Mucosa of descending colon (tissue), 3 donors: ENCODE measurements at regions of chr11 and their contacts with region 1.

Region 1: DNA sequence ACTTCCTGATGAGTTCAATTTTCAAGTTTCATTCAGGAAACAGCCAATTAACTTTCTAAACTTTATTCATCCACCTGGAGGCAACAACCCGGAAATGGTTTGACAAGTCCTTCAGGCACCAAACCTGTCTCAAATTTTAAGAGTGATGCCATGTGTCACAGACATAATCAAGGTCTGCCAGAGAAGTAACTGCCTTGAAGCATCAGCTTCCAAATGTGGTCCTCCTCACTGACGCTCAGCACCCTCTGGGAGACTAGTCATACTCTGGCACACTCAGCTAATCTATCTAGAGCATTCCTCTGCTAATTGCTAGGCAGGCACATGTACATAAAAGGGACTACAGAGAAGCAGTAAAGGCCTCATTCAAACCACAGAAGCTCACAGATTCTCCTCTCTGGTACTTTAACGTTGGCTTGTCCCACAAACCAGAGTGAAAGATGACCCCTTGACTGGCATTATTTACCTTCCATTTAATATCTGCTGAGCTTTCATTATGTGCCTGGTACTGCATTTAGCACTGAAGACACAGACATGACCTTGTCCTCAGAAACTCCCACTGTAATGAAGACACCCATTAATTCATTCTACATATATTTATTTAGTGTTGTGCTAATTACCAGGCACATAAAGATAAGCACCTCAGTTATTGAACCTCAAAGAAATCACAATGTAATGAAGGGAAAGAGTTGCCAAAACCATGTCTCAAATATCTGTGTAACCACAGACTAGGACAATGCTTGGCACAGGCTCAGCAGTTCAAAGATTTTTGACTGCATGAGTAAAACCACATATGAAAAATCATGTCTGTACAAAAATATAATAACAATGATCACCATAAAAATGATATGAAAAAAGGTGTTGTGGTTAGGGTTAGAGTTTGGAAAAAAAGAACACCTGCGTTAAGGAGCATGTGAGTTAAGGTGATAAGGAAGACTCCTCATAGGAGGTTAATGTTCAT is 550.5 kb downstream of the DLG2 start:
- DNase-seq: no peak
- ATAC-seq: peak; percentile 28
- H3K4me3 ChIP-seq: no peak overlapping the region
- H3K4me1 ChIP-seq: no peaks in the 10 kb centered on the region
- CTCF ChIP-seq: no peak

Region 2: GRCh38 chr11:84384731-84385130 is 691.9 kb before region 1 on chr11:
- intact Hi-C with region 1: loop called in 1 of 2 experiments (anchors 10 kb)
- DNase-seq: peak in 1 of 3 donors; percentile 66
- ATAC-seq: peak; percentile 41
- H3K4me3 ChIP-seq: no peak overlapping the region
- H3K4me1 ChIP-seq: no peaks in the 10 kb centered on the region
- CTCF ChIP-seq: peak; percentile 33

Region 3: GRCh38 chr11:84817998-84818397 is 258.7 kb before region 1 on chr11:
- intact Hi-C with region 1: no loop called
- DNase-seq: no peak
- ATAC-seq: no peak
- H3K4me3 ChIP-seq: no peak overlapping the region
- H3K4me1 ChIP-seq: no peaks in the 10 kb centered on the region
- CTCF ChIP-seq: no peak

Region 4: DNA sequence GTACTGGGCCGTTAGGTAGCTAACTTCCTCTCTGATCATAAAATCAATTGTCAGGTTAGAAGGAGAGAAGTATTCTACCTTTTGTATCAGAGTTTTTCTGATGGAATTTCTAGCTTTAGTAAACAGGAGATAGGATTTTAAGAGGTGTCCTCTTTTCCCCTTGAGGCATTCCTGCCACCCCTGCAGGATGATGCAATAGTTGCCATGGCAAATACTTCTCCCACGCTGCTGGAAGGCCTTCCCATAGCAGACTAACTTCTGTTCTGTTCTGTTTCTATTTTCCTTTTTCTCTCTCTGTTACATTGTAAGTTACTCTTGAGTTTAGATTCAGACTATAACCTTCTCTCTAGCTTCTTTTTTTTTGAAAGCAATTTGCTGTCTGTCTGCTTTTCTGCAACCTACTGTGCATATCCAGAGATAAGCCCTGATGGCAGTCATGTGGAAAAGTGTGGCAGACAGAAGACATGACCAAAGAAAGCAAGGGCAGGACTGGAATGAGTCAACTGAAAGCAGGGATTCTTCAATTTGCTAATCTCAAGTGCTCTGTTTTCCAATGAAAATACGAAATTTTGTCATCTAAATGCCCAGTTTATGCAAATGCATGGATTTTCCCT is 128.6 kb before region 1 on chr11:
- intact Hi-C with region 1: no loop called
- DNase-seq: no peak
- ATAC-seq: no peak
- H3K4me3 ChIP-seq: no peak overlapping the region
- H3K4me1 ChIP-seq: no peaks in the 10 kb centered on the region
- CTCF ChIP-seq: no peak

Region 5: DNA sequence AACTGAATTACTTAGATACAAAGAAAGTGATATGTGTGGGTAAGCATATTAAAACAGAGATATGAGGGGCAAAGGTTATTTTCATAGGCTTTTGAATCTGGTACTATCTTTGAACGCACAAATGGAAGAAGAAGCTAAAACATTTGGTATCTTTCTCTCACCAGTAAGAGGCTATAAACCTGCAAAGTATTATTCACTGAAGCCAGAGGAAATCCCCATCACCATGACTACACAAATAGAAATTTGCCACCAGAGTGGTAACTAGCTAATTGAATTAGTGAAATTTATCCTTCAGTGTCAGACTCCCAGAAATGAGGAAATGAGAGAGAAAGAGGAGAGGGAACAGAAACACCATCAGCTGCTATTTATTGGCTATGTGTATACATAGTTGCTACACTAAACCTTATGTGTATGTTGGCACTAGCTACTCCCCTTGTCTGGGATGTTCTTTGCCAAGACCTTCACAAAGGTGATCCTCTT is 47.1 kb after region 1 on chr11:
- intact Hi-C with region 1: no loop called
- DNase-seq: no peak
- ATAC-seq: peak; percentile 71
- H3K4me3 ChIP-seq: no peak overlapping the region
- H3K4me1 ChIP-seq: no peaks in the 10 kb centered on the region
- CTCF ChIP-seq: no peak